ENCODE measurements at regions of chr11 and their contacts with region 1.

Region 1: DNA sequence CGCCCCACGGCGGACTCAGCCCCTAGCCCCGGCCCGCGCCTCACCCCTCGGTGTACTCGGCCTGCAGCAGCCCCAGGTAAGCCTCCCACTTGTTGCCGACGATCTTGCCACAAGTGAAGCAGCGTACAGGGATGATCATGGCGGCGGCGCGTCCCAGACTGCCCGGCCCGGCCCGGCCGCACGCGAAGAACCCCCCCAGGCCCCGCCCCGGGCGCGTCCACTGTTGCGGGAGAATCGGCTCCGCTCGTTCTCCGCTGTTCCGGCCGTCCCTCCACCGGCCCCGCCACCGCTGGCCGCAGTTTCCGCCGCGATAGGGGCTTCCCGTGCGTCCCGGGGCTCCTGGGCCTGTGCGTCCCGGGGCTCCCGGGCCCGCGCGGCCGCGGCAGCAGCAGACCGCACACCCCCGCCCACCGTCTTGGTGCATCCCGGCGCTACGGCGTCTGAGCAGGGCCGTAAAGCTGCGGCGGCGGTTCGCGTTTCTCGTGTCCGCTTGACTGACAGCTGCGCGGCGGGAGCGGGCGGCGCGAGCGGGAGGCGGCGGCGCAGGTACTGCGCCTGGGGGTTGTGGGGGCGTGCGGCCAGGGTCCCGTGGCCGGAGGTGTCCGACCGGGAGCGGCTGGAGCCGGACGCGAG is at the starts of genes POLR2L and TSPAN4:
- DNase-seq: peak; percentile 97
- H3K4me3 ChIP-seq: peak within 1 kb of the TSS; percentile 95 to 100
- H3K27ac ChIP-seq: peak within 1 kb of the TSS; percentile 91 to 96
- H3K4me1 ChIP-seq: peaks cover 24 to 35% of the 10 kb centered on the region in 2 experiments; a peak in 3 of 4 replicates
- H3K27me3 ChIP-seq: no peaks in the 10 kb centered on the region
- CTCF ChIP-seq: no peak
- EP300 ChIP-seq: peak in 1 of 2 experiments; percentile 52; a peak in 1 of 4 replicates
- RAD21 ChIP-seq: no peak
- polyA plus RNA-seq, gene POLR2L: 287 and 540 TPM in 2 replicates
- polyA plus RNA-seq, gene TSPAN4: 201 and 226 TPM in 2 replicates

Region 2: DNA sequence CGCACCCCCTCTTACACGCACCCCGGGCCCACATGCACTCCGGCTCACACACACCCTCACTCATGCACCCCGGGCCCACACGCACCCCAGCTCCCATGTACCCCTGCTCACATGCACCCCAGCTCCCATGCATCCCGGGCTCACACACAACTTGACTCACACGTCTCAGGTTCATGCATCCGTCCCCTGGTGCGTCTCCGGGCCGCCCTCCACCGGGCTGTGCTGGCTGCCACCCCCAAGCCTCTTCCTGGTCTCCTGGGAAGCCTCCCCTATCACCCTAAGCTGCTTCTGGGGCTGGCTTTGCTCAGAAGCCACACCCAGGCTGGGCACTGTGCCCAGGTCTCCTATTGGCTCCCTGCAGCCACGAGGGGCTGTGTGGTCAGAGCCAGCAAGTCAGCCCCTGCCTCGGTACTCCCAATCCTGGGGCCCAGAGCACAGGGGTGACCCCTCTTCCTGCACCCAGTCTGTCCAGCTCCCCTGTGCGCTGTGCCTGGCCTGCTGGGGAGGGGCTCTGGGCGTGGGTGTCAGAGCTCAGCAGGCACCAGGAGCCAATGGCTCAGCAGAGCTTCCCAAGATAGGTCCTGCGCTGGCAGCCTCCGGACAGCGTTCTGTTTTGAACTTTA is 17.1 kb after region 1 on chr11:
- CTCF ChIA-PET with region 1: interaction called, 24 read pairs
- POLR2A ChIA-PET with region 1: interaction called, 13 read pairs
- DNase-seq: peak; percentile 97
- H3K4me3 ChIP-seq: peak overlapping the region in 1 of 2 experiments; percentile 49; a peak in 3 of 4 replicates
- H3K27ac ChIP-seq: peak overlapping the region; percentile 10 to 79; a peak in 3 of 4 replicates
- H3K4me1 ChIP-seq: peaks cover 10 to 75% of the 10 kb centered on the region in 2 experiments; a peak in 2 of 4 replicates
- H3K27me3 ChIP-seq: no peaks in the 10 kb centered on the region
- CTCF ChIP-seq: no peak
- EP300 ChIP-seq: no peak
- RAD21 ChIP-seq: no peak